K562 (cell line): ENCODE measurements at regions of chr13 and their contacts with region 1.

Region 1: GRCh38 chr13:108777421-108778420 is 148.3 kb downstream of the MYO16 start:
- DNase-seq: no peak
- ATAC-seq: no peak
- H3K4me3 ChIP-seq: no peak overlapping the region
- H3K27ac ChIP-seq: no peak overlapping the region
- H3K4me1 ChIP-seq: peaks cover 4 to 8% of the 10 kb centered on the region in 2 experiments; a peak in 2 of 5 replicates
- H3K27me3 ChIP-seq: no peaks in the 10 kb centered on the region
- CTCF ChIP-seq: no peak
- EP300 ChIP-seq: no peak
- POLR2A ChIP-seq: no peak
- RAD21 ChIP-seq: no peak

Region 2: GRCh38 chr13:107258599-107259187 is 1519.0 kb before region 1 on chr13:
- CTCF ChIA-PET with region 1: no interaction called
- POLR2A ChIA-PET with region 1: no interaction called
- in situ Hi-C with region 1: loop called (anchors 10 kb)
- intact Hi-C with region 1: no loop called
- DNase-seq: no peak
- ATAC-seq: no peak
- H3K4me3 ChIP-seq: no peak overlapping the region
- H3K27ac ChIP-seq: no peak overlapping the region
- H3K4me1 ChIP-seq: no peaks in the 10 kb centered on the region
- H3K27me3 ChIP-seq: no peaks in the 10 kb centered on the region
- CTCF ChIP-seq: no peak
- EP300 ChIP-seq: no peak
- POLR2A ChIP-seq: no peak
- RAD21 ChIP-seq: no peak

Region 3: GRCh38 chr13:108342369-108343289 is 435.1 kb before region 1 on chr13:
- CTCF ChIA-PET with region 1: no interaction called
- POLR2A ChIA-PET with region 1: no interaction called
- in situ Hi-C with region 1: no loop called
- intact Hi-C with region 1: loop called (anchors 2 kb)
- DNase-seq: peak in 2 of 4 experiments; percentile 7 to 43
- ATAC-seq: 0 out of 3 replicates have a peak, but pooled peaks have one; percentile 42
- H3K4me3 ChIP-seq: no peak overlapping the region
- H3K27ac ChIP-seq: no peak overlapping the region
- H3K4me1 ChIP-seq: no peaks in the 10 kb centered on the region; a peak in 1 of 5 replicates
- H3K27me3 ChIP-seq: no peaks in the 10 kb centered on the region
- CTCF ChIP-seq: peak; percentile 27 to 48 (median 28); a peak in 3 of 6 replicates
- EP300 ChIP-seq: no peak
- POLR2A ChIP-seq: no peak
- RAD21 ChIP-seq: peak; percentile 49 to 51; a peak in 3 of 4 replicates

Region 4: DNA sequence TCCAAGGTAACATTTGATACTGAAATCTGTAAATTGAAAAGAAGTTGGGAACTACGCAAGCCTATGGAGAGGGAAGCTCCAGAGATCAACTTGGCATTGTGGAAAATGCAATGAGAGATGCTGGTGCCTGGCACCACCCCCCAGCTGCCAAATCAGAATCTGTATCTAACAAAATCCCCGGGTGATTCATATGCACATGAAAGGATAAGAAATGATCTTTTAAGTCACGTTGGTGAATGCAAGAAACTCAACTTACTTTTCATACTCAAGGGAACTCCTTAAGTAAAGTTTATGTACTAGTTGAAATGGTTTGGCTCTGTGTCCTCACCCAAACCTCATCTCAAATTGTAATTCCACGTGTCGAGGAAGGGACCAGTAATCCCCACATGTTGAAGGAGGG is 306.8 kb before region 1 on chr13:
- CTCF ChIA-PET with region 1: no interaction called
- POLR2A ChIA-PET with region 1: no interaction called
- in situ Hi-C with region 1: no loop called
- intact Hi-C with region 1: no loop called
- DNase-seq: no peak
- ATAC-seq: no peak
- H3K4me3 ChIP-seq: no peak overlapping the region
- H3K27ac ChIP-seq: no peak overlapping the region
- H3K4me1 ChIP-seq: no peaks in the 10 kb centered on the region
- H3K27me3 ChIP-seq: no peaks in the 10 kb centered on the region
- CTCF ChIP-seq: no peak
- EP300 ChIP-seq: no peak
- POLR2A ChIP-seq: no peak
- RAD21 ChIP-seq: no peak

Region 5: GRCh38 chr13:108609353-108609752 is 168.4 kb before region 1 on chr13:
- CTCF ChIA-PET with region 1: no interaction called
- POLR2A ChIA-PET with region 1: no interaction called
- in situ Hi-C with region 1: no loop called
- intact Hi-C with region 1: loop called (anchors 5 kb)
- DNase-seq: peak in 1 of 4 experiments; percentile 18
- ATAC-seq: peak; percentile 54; the same call in 2 of the 3 replicates
- H3K4me3 ChIP-seq: no peak overlapping the region
- H3K27ac ChIP-seq: no peak overlapping the region
- H3K4me1 ChIP-seq: no peaks in the 10 kb centered on the region; a peak in 1 of 5 replicates
- H3K27me3 ChIP-seq: no peaks in the 10 kb centered on the region
- CTCF ChIP-seq: peak in 1 of 3 experiments; percentile 20; a peak in 2 of 6 replicates
- EP300 ChIP-seq: no peak
- POLR2A ChIP-seq: no peak
- RAD21 ChIP-seq: peak in 1 of 2 experiments; percentile 45; a peak in 2 of 4 replicates

Region 6: DNA sequence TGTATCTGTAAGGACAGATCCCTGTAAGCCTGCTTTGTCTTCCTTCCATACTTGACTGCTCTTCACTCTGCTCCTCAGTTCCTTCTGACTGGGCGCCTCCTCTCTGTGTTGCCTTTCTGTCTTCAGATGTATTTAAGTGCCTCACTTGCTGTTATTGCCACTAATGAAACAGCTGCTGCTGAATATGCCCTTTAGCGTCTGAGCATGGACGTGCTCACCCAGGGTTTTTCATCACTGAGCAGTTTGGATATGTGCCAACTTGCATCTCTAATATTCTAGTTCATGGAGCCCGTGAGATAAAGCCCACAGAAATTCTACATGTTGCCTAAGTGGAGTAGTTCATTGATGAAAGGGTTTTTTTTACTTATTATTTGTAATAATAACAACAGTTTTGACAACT is 49.9 kb after region 1 on chr13:
- CTCF ChIA-PET with region 1: no interaction called
- POLR2A ChIA-PET with region 1: no interaction called
- in situ Hi-C with region 1: no loop called
- intact Hi-C with region 1: no loop called
- DNase-seq: no peak
- ATAC-seq: no peak
- H3K4me3 ChIP-seq: no peak overlapping the region
- H3K27ac ChIP-seq: no peak overlapping the region
- H3K4me1 ChIP-seq: no peaks in the 10 kb centered on the region
- H3K27me3 ChIP-seq: no peaks in the 10 kb centered on the region
- CTCF ChIP-seq: no peak
- EP300 ChIP-seq: no peak
- POLR2A ChIP-seq: no peak
- RAD21 ChIP-seq: no peak

Region 7: GRCh38 chr13:108895220-108895704 is 117.5 kb after region 1 on chr13:
- CTCF ChIA-PET with region 1: no interaction called
- POLR2A ChIA-PET with region 1: no interaction called
- in situ Hi-C with region 1: no loop called
- intact Hi-C with region 1: loop called (anchors 10 kb)
- DNase-seq: peak in 1 of 4 experiments; percentile 48
- ATAC-seq: no peak
- H3K4me3 ChIP-seq: no peak overlapping the region
- H3K27ac ChIP-seq: no peak overlapping the region; the same call in 2 of the 3 replicates
- H3K4me1 ChIP-seq: no peaks in the 10 kb centered on the region
- H3K27me3 ChIP-seq: no peaks in the 10 kb centered on the region
- CTCF ChIP-seq: peak; percentile 20 to 47 (median 21); a peak in 3 of 6 replicates
- EP300 ChIP-seq: no peak
- POLR2A ChIP-seq: no peak
- RAD21 ChIP-seq: peak; percentile 35 to 52

Region 8: DNA sequence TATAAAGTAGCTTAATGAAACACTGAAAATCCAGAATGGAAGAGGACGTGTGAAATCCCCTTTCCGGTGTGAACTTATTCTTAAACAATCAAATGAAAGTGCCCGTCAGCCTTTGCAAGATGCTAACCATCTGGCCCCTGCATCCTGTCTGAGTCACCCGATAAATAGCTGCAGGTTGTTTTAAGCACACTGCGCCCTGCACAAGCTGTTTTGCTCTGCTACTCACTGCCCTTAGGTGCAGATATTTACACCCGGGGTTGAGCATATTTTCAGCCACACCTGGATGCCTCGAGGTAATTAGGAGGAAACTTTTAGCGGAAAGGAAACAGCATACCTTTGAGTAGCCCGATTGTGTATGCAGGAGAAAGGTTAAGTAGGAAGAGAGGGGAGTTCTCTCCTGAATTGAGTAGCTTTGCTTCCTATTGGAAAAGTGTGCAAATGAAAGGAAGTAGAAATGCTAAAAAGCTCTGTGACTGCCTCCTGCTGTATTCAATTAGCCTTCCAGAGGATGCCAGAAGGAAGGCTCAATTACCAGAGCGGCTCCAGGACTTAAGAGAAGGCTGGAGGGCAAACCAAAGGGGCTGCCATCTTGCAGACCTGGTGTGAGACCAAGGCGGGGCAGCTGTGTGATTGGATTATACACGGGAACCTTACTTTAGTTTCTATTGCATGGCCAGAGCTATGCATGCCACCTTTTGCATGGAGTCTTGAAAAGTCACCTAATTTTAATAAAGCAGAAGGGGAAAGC is 966.2 kb after region 1 on chr13:
- CTCF ChIA-PET with region 1: no interaction called
- POLR2A ChIA-PET with region 1: no interaction called
- in situ Hi-C with region 1: no loop called
- intact Hi-C with region 1: no loop called
- DNase-seq: peak in 1 of 4 experiments; percentile 19
- ATAC-seq: peak; percentile 47
- H3K4me3 ChIP-seq: no peak overlapping the region
- H3K27ac ChIP-seq: no peak overlapping the region
- H3K4me1 ChIP-seq: peaks cover 15 to 31% of the 10 kb centered on the region in 2 experiments; a peak in 4 of 5 replicates
- H3K27me3 ChIP-seq: peaks cover 20 to 46% of the 10 kb centered on the region in 2 experiments
- CTCF ChIP-seq: no peak
- EP300 ChIP-seq: no peak
- POLR2A ChIP-seq: no peak
- RAD21 ChIP-seq: no peak